Esophagus squamous epithelium (tissue), 5 donors: ENCODE measurements at regions of chr12 and their contacts with region 1.

Region 1: GRCh38 chr12:63843721-63844390 is 644 bp upstream of the SRGAP1 start:
- DNase-seq: peak; percentile 23
- H3K4me3 ChIP-seq: peak overlapping the region; percentile 79 to 90 (median 86)
- H3K27ac ChIP-seq: peak overlapping the region; percentile 85 to 96 (median 92)
- H3K4me1 ChIP-seq: peaks cover 0 to 26% (median 9%) of the 10 kb centered on the region in 3 donors
- H3K27me3 ChIP-seq: no peaks in the 10 kb centered on the region
- CTCF ChIP-seq: peak; percentile 75 to 97 (median 91)
- POLR2A ChIP-seq: peak in 1 of 4 donors; percentile 43

Region 2: GRCh38 chr12:63779498-63780481 is 64.1 kb before region 1 on chr12 and contains the start of gene RXYLT1:
- intact Hi-C with region 1: no loop called
- DNase-seq: peak; percentile 26
- H3K4me3 ChIP-seq: peak within 1 kb of the TSS; percentile 76 to 88 (median 86)
- H3K27ac ChIP-seq: peak within 1 kb of the TSS; percentile 87 to 96 (median 92)
- H3K4me1 ChIP-seq: peaks cover 0 to 19% (median 3%) of the 10 kb centered on the region in 3 donors
- H3K27me3 ChIP-seq: no peaks in the 10 kb centered on the region
- CTCF ChIP-seq: peak in 2 of 6 experiments; percentile 17 to 28
- POLR2A ChIP-seq: peak in 2 of 4 donors; percentile 61 to 74
- total RNA-seq, gene RXYLT1: 6.9 to 16.7 (median 13.0) TPM

Region 3: DNA sequence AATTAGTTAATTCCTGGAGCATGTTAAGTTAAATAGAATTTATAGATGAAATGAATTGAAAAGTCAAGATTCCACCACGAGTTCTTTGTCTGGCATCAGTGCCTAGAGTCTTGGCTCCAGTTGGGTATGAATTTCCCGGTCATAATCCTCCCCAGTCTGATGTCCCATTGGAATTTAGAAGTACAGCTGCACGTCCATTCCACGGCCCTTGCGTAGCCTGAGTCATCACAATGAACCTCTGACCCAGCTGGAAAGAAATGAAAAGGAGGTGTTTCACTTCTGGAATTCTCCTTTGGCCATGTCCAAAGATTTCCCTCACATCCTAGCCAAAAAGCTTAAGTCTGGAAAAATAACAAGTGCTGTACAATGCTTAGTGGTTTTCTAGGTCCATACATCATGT is 255.5 kb after region 1 on chr12:
- intact Hi-C with region 1: loop called (anchors 10 kb)
- DNase-seq: no peak
- H3K4me3 ChIP-seq: no peak overlapping the region
- H3K27ac ChIP-seq: peak overlapping the region in 1 of 4 donors; percentile 25
- H3K4me1 ChIP-seq: peaks cover 0 to 4% (median 0%) of the 10 kb centered on the region in 3 donors
- H3K27me3 ChIP-seq: no peaks in the 10 kb centered on the region
- CTCF ChIP-seq: no peak
- POLR2A ChIP-seq: no peak

Region 4: GRCh38 chr12:64181504-64182291 is 337.8 kb after region 1 on chr12:
- intact Hi-C with region 1: loop called (anchors 10 kb)
- DNase-seq: no peak
- H3K4me3 ChIP-seq: peak overlapping the region in 1 of 4 donors; percentile 16
- H3K27ac ChIP-seq: peak overlapping the region; percentile 44 to 78 (median 73)
- H3K4me1 ChIP-seq: peaks cover 4 to 23% (median 10%) of the 10 kb centered on the region in 3 donors
- H3K27me3 ChIP-seq: no peaks in the 10 kb centered on the region
- CTCF ChIP-seq: peak in 5 of 6 experiments; percentile 44 to 55 (median 47)
- POLR2A ChIP-seq: no peak

Region 5: DNA sequence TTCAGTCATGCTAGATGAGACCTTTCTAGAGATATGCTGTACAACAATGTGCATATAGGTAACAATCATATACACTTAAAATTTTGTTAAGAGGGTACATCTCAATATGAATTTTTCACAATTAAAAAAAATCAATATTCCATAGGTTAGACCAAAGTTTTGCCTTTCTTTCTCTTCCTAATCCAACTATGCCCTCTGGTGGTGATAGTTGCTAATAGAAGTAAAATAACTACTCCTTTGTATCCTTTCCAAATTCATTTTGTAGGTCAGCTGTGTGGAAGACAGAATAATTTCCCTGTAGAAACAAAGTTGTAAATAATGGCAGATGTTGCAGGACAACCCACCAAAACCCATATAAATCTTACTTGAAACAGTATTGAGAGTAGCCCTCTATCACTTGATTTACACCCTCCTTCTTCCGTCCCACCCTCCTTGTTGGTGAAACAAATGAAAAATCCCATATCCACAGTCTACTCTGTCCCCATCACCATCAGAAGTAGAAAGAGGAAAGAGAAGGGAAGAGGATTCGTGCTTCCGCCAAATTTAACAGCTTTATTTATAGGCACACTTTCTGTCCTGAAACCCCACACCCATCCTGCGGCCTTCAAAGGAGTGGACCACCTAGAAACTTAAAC is 412.4 kb after region 1 on chr12:
- intact Hi-C with region 1: loop called (anchors 5 kb)
- DNase-seq: no peak
- H3K4me3 ChIP-seq: no peak overlapping the region
- H3K27ac ChIP-seq: no peak overlapping the region
- H3K4me1 ChIP-seq: no peaks in the 10 kb centered on the region
- H3K27me3 ChIP-seq: no peaks in the 10 kb centered on the region
- CTCF ChIP-seq: peak in 5 of 6 experiments; percentile 66 to 73 (median 71)
- POLR2A ChIP-seq: no peak